Naive thymus-derived CD4-positive, alpha-beta T cell (primary cell): ENCODE measurements at regions of chr4 and their contacts with region 1.

Region 1: GRCh38 chr4:158850800-158851644 is 82.2 kb downstream of the FNIP2 start:
- DNase-seq: peak in 5 of 9 donors; percentile 27 to 37 (median 36)
- ATAC-seq: peak; percentile 62
- H3K4me3 ChIP-seq: no peak overlapping the region
- H3K4me3 Mint-ChIP-seq: no peak overlapping the region
- H3K27ac ChIP-seq: no peak overlapping the region
- H3K27ac Mint-ChIP-seq: no peak overlapping the region
- H3K4me1 ChIP-seq: no peaks in the 10 kb centered on the region
- H3K4me1 Mint-ChIP-seq: peaks cover 7 to 13% (median 11%) of the 10 kb centered on the region in 7 donors
- H3K27me3 ChIP-seq: no peaks in the 10 kb centered on the region
- H3K27me3 Mint-ChIP-seq: no peaks in the 10 kb centered on the region

Region 2: GRCh38 chr4:158253350-158253980 is 597.6 kb before region 1 on chr4:
- CTCF ChIA-PET with region 1: no interaction called
- POLR2A ChIA-PET with region 1: no interaction called
- intact Hi-C with region 1: loop called (anchors 1 to 5 kb)
- DNase-seq: peak in 7 of 9 donors; percentile 2 to 51 (median 26)
- ATAC-seq: peak; percentile 73
- H3K4me3 ChIP-seq: no peak overlapping the region
- H3K4me3 Mint-ChIP-seq: peak overlapping the region in 1 of 10 donors; percentile 19
- H3K27ac ChIP-seq: no peak overlapping the region
- H3K27ac Mint-ChIP-seq: no peak overlapping the region
- H3K4me1 ChIP-seq: no peaks in the 10 kb centered on the region
- H3K4me1 Mint-ChIP-seq: peaks cover 3 to 14% (median 12%) of the 10 kb centered on the region in 7 donors
- H3K27me3 ChIP-seq: peaks cover 0 to 5% of the 10 kb centered on the region in 2 donors
- H3K27me3 Mint-ChIP-seq: peaks cover 0 to 13% (median 9%) of the 10 kb centered on the region in 5 donors

Region 3: DNA sequence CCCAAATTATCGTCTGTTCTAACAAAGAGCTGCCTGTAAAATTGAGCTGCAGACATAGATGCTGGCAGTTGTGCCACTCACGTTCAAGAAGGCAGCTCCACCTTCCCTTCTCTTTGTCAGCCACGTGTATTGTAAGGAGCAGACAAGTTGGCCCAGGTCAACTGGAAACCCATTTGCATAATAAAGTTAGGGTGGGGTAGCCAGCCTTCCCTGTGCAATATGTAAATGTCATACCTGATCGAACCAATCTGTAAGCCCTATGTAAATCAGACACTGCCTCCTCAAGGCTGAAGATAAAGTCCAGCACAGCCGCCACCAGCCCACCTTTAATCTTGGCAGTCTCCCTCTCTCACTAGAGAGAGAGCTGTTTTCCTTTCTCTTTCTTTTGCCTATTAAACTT is 523.5 kb before region 1 on chr4:
- CTCF ChIA-PET with region 1: no interaction called
- POLR2A ChIA-PET with region 1: no interaction called
- intact Hi-C with region 1: no loop called
- DNase-seq: no peak
- ATAC-seq: no peak
- H3K4me3 ChIP-seq: no peak overlapping the region
- H3K4me3 Mint-ChIP-seq: no peak overlapping the region
- H3K27ac ChIP-seq: no peak overlapping the region
- H3K27ac Mint-ChIP-seq: peak overlapping the region in 1 of 9 donors; percentile 26
- H3K4me1 ChIP-seq: no peaks in the 10 kb centered on the region
- H3K4me1 Mint-ChIP-seq: no peaks in the 10 kb centered on the region
- H3K27me3 ChIP-seq: no peaks in the 10 kb centered on the region
- H3K27me3 Mint-ChIP-seq: no peaks in the 10 kb centered on the region

Region 4: DNA sequence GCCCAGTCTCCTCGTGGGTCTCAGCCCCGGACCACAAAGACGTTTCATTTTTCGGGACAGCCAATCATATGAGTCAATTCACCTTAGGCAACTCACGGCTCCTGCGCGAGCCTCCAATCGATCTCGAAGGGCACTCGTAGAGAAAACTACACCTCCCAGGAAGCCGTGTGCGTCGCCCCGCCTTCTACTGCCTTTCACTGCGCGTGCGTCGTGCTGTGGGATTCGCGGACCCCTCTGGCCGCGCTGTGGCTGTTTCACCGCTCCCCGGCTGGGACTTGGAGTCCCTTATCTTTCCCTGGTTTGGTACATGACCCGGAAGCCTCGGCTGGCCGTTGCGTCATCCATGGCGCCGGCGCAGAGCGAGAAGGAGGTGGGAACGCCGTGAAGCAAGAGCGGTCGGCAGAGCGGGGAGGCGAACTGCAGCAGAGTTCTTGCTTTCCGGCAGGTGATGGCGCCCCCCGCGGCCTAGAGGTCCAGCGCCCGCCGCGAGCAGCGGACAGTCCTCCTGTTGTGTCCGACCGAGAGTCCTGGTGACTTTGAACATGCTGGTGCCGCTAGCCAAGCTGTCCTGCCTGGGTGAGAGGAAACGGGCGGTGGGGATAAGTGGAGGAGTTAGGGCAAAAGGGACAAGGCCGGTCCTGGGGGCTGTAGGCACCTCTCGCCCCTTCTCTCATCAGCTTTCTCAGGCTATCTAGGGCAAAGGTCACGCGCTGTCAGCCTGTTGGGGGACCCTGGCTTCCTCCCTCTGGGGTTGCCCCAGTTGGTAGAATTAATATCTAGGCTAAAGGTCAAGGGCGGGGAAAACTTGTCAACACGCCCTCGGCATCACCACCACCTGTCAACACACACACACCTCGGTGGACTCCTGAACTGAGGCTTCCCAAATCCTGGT is 178.9 kb before region 1 on chr4 and contains the start of gene ETFDH:
- CTCF ChIA-PET with region 1: no interaction called
- POLR2A ChIA-PET with region 1: no interaction called
- intact Hi-C with region 1: loop called (anchors 2 kb)
- DNase-seq: peak; percentile 91 to 99 (median 98)
- ATAC-seq: peak; percentile 88
- H3K4me3 ChIP-seq: peak within 1 kb of the TSS; percentile 80
- H3K4me3 Mint-ChIP-seq: peak within 1 kb of the TSS; percentile 88 to 99 (median 96)
- H3K27ac ChIP-seq: peak within 1 kb of the TSS; percentile 93
- H3K27ac Mint-ChIP-seq: peak within 1 kb of the TSS; percentile 91 to 99 (median 97)
- H3K4me1 ChIP-seq: peaks cover 13 to 16% of the 10 kb centered on the region in 2 donors
- H3K4me1 Mint-ChIP-seq: peaks cover 6 to 43% (median 35%) of the 10 kb centered on the region in 7 donors
- H3K27me3 ChIP-seq: no peaks in the 10 kb centered on the region
- H3K27me3 Mint-ChIP-seq: peaks cover 0 to 3% (median 0%) of the 10 kb centered on the region in 5 donors
- total RNA-seq, gene ETFDH: 12.5 to 25.8 (median 17.5) TPM

Region 5: DNA sequence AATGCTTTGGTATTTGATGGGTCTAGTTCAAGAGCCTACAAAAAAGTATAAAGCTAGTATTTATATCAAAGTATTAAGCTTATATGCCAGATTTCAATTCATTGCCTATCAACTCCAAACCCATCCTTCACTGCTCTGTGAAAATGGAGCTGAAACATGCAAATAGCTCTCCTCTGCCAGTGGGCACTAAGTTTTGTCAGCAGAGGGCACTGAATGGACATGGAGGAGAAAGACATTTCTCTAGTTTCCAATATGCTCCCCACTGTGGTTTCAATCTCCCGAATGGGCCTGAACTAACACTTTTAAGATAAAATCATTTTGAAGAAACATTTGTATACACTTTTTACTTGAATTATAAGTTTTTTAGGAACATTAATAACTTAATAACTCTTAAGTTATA is 140.2 kb before region 1 on chr4:
- CTCF ChIA-PET with region 1: interaction called, 11 read pairs
- POLR2A ChIA-PET with region 1: no interaction called
- intact Hi-C with region 1: loop called in 1 of 2 experiments (anchors 1 kb)
- DNase-seq: no peak
- ATAC-seq: no peak
- H3K4me3 ChIP-seq: no peak overlapping the region
- H3K4me3 Mint-ChIP-seq: no peak overlapping the region
- H3K27ac ChIP-seq: no peak overlapping the region
- H3K27ac Mint-ChIP-seq: peak overlapping the region in 2 of 9 donors; percentile 1 to 25
- H3K4me1 ChIP-seq: no peaks in the 10 kb centered on the region
- H3K4me1 Mint-ChIP-seq: peaks cover 0 to 6% (median 0%) of the 10 kb centered on the region in 7 donors
- H3K27me3 ChIP-seq: no peaks in the 10 kb centered on the region
- H3K27me3 Mint-ChIP-seq: no peaks in the 10 kb centered on the region

Region 6: DNA sequence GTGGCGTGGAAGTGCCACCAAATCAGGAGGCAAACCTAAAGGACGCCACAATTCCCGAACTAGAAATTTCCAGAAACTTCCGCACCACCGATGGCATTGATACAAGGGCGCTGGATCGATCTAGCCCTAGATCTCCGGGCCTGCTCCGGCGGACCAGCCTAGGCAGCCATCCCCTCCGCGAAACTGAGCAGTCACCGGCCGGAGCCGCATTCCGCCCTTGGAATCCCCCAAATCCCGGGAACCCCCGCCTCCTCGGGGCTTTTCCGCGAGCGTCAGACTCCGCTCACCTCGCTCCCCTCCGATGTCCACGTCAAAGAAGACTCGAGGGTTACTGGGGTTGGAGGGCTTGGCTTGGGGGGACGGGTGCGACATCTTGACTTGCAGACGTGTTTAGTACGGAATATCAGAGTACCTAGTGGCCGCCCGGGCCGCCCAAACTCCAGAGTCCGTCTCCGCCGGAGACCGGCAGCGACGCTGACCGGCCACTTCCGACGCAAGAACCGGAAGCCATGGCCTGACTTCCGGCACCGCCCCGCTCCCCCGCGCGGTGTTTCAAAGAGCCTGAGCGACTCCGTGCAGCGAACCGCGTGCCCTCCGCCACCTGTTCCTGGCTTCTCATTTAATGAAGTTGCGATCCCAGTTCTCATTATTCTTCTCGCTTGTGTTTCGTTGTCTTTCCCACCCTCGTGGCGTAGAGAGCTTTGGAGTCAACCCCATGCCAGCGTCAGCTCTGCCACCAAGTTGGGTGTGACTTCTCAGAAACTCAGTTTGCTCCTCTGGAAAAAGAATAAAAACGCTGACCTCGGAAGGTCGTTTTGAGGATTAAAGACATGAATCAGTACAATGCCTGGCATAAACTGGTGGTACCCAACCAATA is 127.9 kb before region 1 on chr4 and contains the start of gene PPID:
- CTCF ChIA-PET with region 1: interaction called, 14 read pairs
- POLR2A ChIA-PET with region 1: no interaction called
- intact Hi-C with region 1: loop called in 1 of 2 experiments (anchors 2 kb)
- DNase-seq: peak; percentile 64 to 86 (median 71)
- ATAC-seq: peak; percentile 90
- H3K4me3 ChIP-seq: peak within 1 kb of the TSS; percentile 93
- H3K4me3 Mint-ChIP-seq: peak within 1 kb of the TSS; percentile 92 to 99 (median 98)
- H3K27ac ChIP-seq: peak within 1 kb of the TSS; percentile 89
- H3K27ac Mint-ChIP-seq: peak within 1 kb of the TSS; percentile 95 to 99 (median 99)
- H3K4me1 ChIP-seq: peaks cover 0 to 3% of the 10 kb centered on the region in 2 donors
- H3K4me1 Mint-ChIP-seq: peaks cover 16 to 47% (median 37%) of the 10 kb centered on the region in 7 donors
- H3K27me3 ChIP-seq: no peaks in the 10 kb centered on the region
- H3K27me3 Mint-ChIP-seq: peaks cover under 1 to 17% (median 7%) of the 10 kb centered on the region in 5 donors
- total RNA-seq, gene PPID: 13.4 to 46.1 (median 26.5) TPM

Region 7: DNA sequence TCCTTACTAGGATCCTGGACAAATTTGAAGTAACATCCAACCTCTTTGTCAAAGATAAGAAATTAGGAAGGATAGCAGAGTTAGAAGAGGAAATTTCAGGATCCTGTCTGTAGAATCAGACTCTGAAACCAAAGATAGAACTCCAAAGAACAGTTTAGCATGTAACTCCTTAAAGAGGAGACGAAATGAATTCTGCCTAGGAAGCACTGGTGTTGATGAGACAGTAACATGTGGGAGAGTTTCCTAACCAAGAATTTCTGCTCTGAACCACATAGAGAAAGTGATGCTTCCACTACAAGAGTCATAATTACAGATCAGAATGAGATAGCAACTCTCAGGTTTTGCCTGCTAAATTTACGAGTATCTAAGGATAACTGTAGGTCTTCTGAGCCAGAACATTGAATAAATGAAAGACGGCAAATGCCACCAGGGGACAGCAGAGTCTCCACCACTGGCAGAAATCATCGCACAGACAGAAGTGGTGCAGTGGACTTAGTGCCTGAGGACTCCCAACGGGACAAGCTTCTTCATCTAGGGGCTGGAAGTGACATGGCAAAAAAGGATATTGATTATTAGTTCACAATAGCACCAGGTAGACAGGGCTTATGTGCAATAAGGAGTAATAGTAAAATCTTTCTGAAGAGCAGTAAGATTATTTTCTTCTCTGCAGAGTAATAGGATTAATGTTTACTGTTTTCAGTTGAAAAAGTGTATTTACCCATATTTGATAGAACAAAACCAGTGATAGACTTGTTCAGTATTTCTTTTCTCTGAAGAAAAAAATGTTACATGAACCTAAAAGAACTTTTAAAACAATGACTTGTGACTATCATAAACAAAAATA is 121.1 kb before region 1 on chr4:
- CTCF ChIA-PET with region 1: interaction called, 14 read pairs
- POLR2A ChIA-PET with region 1: no interaction called
- intact Hi-C with region 1: loop called (anchors 1 kb)
- DNase-seq: peak; percentile 18 to 57 (median 44)
- ATAC-seq: peak; percentile 93
- H3K4me3 ChIP-seq: no peak overlapping the region
- H3K4me3 Mint-ChIP-seq: no peak overlapping the region
- H3K27ac ChIP-seq: no peak overlapping the region
- H3K27ac Mint-ChIP-seq: no peak overlapping the region
- H3K4me1 ChIP-seq: no peaks in the 10 kb centered on the region
- H3K4me1 Mint-ChIP-seq: peaks cover 0 to 23% (median 0%) of the 10 kb centered on the region in 7 donors
- H3K27me3 ChIP-seq: no peaks in the 10 kb centered on the region
- H3K27me3 Mint-ChIP-seq: peaks cover 26 to 42% (median 32%) of the 10 kb centered on the region in 5 donors

Region 8: DNA sequence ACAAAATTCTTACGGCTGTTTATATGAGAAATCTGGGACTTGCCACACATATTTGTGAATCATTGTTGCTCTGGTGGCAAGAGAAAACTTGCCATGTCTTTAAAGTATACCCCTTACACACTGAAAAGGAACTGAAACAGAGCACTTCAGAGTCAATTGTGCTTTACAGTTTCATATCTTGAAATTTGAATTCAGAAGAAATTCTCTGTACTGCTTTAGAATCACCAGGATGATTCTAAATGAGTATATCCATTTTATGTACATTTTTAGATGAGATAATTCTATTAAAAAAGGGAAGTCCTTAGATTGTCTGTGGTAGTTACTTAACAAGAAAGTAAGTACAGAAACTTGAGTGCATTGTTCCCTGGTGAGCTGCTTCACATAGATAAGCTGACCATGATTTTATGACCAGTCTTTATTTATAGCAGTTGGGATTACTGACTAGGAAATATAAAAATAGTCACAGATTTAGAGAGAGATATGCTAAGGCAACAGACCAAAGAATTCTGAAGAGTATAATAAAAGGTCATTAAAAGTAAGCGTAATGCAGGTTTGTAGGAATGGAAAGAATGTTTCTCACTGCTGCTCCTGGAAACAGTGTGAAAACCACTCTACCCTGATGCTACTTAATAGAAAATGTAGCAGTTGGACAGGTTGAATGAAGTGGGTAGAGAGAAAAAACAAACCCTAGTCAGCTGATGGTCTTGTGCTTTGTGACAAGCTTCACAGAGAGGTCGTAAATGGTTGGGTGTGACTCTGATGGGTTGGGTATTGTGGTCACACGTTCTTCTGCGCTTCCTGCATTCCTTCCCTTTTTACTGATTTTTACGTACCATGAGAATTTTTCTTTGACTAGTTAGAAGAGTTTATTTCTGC is 41.2 kb before region 1 on chr4:
- CTCF ChIA-PET with region 1: no interaction called
- POLR2A ChIA-PET with region 1: no interaction called
- intact Hi-C with region 1: loop called in 1 of 2 experiments (anchors 1 kb)
- DNase-seq: peak in 6 of 9 donors; percentile 28 to 51 (median 47)
- ATAC-seq: peak; percentile 84
- H3K4me3 ChIP-seq: no peak overlapping the region
- H3K4me3 Mint-ChIP-seq: peak overlapping the region; percentile 62 to 88 (median 75)
- H3K27ac ChIP-seq: peak overlapping the region; percentile 35
- H3K27ac Mint-ChIP-seq: peak overlapping the region; percentile 71 to 87 (median 82)
- H3K4me1 ChIP-seq: peaks cover 4 to 30% of the 10 kb centered on the region in 2 donors
- H3K4me1 Mint-ChIP-seq: peaks cover 31 to 58% (median 44%) of the 10 kb centered on the region in 7 donors
- H3K27me3 ChIP-seq: no peaks in the 10 kb centered on the region
- H3K27me3 Mint-ChIP-seq: no peaks in the 10 kb centered on the region

Region 9: DNA sequence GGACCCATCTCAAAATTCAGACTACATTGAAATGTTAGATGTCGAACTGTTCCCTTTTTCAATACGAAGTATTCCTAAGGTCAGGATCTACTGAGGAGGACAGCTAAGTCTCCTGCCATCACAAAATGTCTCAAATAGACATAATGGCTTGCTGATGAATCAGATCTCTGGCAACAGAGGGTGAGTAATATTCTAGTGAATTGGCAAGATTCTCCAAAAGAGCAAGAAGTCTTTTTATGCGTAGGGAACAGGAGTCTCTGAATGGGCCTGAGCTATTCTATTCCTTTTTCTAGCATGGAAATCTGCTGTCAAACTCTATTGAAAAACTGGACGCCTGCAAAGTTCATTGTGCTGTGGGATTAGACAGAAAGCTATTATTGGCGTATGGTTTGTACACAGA is 63.2 kb after region 1 on chr4:
- CTCF ChIA-PET with region 1: no interaction called
- POLR2A ChIA-PET with region 1: no interaction called
- intact Hi-C with region 1: no loop called
- DNase-seq: no peak
- ATAC-seq: no peak
- H3K4me3 ChIP-seq: no peak overlapping the region
- H3K4me3 Mint-ChIP-seq: no peak overlapping the region
- H3K27ac ChIP-seq: no peak overlapping the region
- H3K27ac Mint-ChIP-seq: no peak overlapping the region
- H3K4me1 ChIP-seq: no peaks in the 10 kb centered on the region
- H3K4me1 Mint-ChIP-seq: no peaks in the 10 kb centered on the region
- H3K27me3 ChIP-seq: no peaks in the 10 kb centered on the region
- H3K27me3 Mint-ChIP-seq: no peaks in the 10 kb centered on the region